ENCODE measurements at regions of chr14 and their contacts with region 1.

Region 1: DNA sequence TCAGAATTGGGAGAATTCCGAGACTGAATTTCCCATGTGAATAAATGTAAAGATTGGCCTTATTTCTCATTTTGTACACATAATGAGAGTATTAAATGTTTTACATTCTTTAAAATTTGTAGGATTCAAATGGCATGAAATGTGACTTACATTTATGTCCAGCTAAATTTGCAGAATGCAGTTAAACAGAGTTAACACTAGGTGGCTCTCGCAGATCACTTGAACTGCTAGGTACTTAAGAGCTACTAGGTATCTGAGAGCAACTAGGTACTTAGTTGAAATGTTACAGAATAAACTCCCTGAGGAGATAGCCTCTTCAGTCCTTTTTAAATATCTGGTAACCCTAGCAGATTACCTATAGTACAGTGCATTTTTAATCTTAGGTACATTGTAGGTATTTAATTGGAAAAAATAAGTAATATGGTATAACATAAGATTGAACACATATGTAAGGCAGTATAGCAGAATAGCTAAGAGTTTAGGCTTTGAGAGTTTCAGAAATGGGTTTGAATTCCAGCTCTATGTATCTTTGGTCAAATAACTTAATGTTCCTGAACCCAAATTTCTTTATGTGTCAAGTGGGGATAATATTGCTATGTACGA is 73.8 kb downstream of the KIAA0586 start:
- DNase-seq: peak; percentile 67
- H3K4me3 ChIP-seq: no peak overlapping the region
- H3K27ac ChIP-seq: no peak overlapping the region
- H3K4me1 ChIP-seq: no peaks in the 10 kb centered on the region
- H3K27me3 ChIP-seq: no peaks in the 10 kb centered on the region
- CTCF ChIP-seq: peak; percentile 64 to 67
- POLR2A ChIP-seq: no peak

Region 2: GRCh38 chr14:58488550-58488949 is 12.8 kb before region 1 on chr14:
- CTCF ChIA-PET with region 1: interaction called, 19 read pairs
- POLR2A ChIA-PET with region 1: no interaction called
- dilution Hi-C with region 1: no loop called
- intact Hi-C with region 1: no loop called
- DNase-seq: peak; percentile 46
- H3K4me3 ChIP-seq: no peak overlapping the region
- H3K27ac ChIP-seq: no peak overlapping the region
- H3K4me1 ChIP-seq: peaks cover 6% of the 10 kb centered on the region
- H3K27me3 ChIP-seq: no peaks in the 10 kb centered on the region
- CTCF ChIP-seq: no peak
- POLR2A ChIP-seq: no peak

Region 3: GRCh38 chr14:58574623-58575022 is 73.3 kb after region 1 on chr14:
- CTCF ChIA-PET with region 1: interaction called, 22 read pairs
- POLR2A ChIA-PET with region 1: no interaction called
- dilution Hi-C with region 1: no loop called
- intact Hi-C with region 1: loop called (anchors 1 kb)
- DNase-seq: no peak
- H3K4me3 ChIP-seq: no peak overlapping the region
- H3K27ac ChIP-seq: no peak overlapping the region
- H3K4me1 ChIP-seq: no peaks in the 10 kb centered on the region
- H3K27me3 ChIP-seq: peaks cover 3 to 4% of the 10 kb centered on the region in 2 experiments
- CTCF ChIP-seq: peak in 1 of 2 donors; percentile 20
- POLR2A ChIP-seq: no peak

Region 4: DNA sequence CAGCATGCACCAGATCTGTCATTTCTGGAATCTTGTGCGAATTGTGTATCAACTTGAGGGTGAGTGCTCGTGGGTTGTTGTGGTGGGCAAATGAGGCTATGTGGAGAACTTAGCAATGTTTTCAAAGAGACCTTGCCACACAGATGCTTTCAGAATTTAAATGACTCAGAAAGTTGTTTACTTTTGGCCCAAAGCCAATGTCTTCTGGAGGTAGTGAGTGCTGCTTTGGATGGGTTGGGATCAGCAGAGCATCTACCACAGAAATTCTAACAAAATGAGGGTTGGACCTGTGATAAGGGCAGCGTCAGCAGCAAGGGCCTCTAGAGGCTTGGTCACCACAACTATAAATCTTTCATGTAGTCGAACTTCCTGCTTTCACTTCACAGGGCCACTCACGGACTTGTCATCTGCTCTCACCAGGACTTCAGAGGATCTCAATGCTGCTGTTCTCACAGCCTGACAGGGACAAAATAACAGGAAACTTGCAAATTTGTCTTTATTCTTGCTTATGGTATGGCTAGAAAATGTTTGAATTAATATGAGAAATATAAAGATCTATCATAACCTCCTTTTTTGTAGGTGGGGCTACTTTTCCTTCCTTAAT is 247.9 kb after region 1 on chr14:
- CTCF ChIA-PET with region 1: interaction called, 3 read pairs
- POLR2A ChIA-PET with region 1: no interaction called
- dilution Hi-C with region 1: no loop called
- intact Hi-C with region 1: loop called (anchors 10 kb)
- DNase-seq: peak; percentile 45
- H3K4me3 ChIP-seq: no peak overlapping the region
- H3K27ac ChIP-seq: no peak overlapping the region
- H3K4me1 ChIP-seq: peaks cover 17% of the 10 kb centered on the region
- H3K27me3 ChIP-seq: no peaks in the 10 kb centered on the region
- CTCF ChIP-seq: no peak
- POLR2A ChIP-seq: no peak

Region 5: DNA sequence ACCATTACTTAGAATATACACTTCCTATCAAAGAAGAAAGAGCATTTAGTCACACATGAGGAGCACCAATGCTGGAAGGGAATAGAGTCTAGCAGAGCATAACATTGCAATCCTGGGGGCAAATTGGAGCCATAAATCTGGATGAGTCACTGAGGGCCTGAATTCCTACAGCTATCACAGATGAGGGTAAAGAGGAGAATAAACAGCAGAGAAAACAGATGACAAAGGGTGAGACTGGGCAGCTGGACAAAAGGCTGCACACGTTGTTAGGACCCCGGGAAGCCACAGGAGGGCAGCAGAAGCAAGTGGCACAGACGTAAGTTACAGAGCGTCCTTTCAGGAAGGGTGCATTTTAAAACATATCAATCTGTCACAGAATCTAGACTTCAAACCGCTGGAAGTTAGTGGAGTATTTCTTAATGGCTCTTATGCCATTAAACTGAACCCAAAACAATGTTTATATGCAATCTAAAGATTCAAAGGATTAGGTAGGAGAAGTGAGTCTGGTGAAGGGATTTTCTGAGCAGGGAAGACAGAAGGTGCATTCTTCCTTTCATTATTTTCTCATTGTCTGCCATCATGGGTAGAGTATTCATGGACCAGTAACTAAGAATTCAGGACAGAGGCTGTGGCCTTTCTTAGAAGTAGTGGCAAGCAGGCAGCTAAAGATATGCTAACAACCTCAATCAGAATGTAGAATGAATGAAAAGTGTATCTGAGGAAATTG is 527.3 kb after region 1 on chr14:
- CTCF ChIA-PET with region 1: interaction called, 35 read pairs
- POLR2A ChIA-PET with region 1: no interaction called
- dilution Hi-C with region 1: no loop called
- intact Hi-C with region 1: loop called (anchors 1 kb)
- DNase-seq: peak; percentile 66
- H3K4me3 ChIP-seq: no peak overlapping the region
- H3K27ac ChIP-seq: no peak overlapping the region
- H3K4me1 ChIP-seq: no peaks in the 10 kb centered on the region
- H3K27me3 ChIP-seq: peaks cover 5 to 8% of the 10 kb centered on the region in 2 experiments
- CTCF ChIP-seq: peak; percentile 82 to 87
- POLR2A ChIP-seq: no peak

Region 6: DNA sequence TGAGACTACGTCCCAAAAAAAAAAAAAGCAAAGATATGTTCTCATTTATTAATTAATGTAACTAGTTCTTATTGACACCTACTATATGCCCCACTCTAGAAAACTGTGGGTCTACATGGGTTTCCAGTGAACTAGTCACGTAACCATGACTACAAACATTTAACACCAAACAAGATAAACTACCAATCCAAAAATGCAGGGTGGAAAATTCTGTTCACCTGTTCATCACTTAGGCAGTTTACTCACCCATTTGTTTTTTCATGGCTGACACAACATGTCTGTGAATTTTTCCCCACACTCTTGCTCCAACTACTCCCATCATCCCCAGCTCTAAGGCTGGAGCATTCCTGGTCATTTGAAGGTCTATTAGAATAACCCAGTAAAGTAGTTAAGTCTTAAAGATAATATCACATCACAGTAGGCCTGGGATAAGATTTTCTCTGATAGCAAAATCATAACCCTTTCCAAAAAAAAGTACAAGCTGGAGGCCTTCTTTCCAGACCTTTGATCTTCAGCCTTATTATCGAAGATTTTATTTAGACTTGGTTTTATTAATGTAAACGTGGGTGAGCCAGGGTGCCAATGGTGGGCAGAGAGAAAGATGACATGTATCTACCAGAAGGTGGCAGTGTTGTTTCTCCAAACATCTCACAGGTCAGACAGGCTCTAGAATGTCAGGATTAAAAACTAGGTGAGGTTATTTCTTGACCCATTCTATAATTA is 625.6 kb after region 1 on chr14:
- CTCF ChIA-PET with region 1: interaction called, 30 read pairs
- POLR2A ChIA-PET with region 1: no interaction called
- dilution Hi-C with region 1: no loop called
- intact Hi-C with region 1: loop called (anchors 1 kb)
- DNase-seq: peak; percentile 64
- H3K4me3 ChIP-seq: no peak overlapping the region
- H3K27ac ChIP-seq: no peak overlapping the region
- H3K4me1 ChIP-seq: no peaks in the 10 kb centered on the region
- H3K27me3 ChIP-seq: peaks cover 5 to 6% of the 10 kb centered on the region in 2 experiments
- CTCF ChIP-seq: peak; percentile 58 to 60
- POLR2A ChIP-seq: no peak

Region 7: DNA sequence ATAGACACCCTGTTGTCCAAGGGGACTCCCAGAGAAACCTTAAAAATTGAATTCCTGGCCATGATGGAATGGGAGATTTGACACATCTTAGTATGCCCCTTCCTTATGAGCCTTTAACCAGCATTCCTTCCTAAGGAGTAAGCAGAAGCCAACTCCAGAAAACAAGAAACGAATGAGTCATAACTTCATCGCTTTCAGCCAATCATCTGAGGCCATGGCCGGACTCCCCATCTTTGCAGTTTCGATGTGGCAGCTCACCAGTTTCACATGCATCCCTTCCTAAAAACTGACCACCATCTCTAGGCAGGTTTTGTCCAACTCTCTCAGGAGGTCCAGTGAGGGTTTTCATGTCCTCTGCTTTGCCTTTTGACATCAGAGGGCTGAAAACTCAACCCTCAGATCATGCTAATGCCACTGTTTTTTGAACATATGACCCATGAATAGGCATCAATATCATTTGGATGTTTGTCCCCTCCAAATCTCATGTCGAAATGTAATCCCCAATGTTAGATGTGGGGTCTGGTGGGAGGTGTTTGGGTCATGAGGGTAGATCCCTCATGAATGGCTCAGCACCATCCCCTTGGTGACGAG is 707.0 kb after region 1 on chr14:
- CTCF ChIA-PET with region 1: no interaction called
- POLR2A ChIA-PET with region 1: no interaction called
- dilution Hi-C with region 1: no loop called
- intact Hi-C with region 1: no loop called
- DNase-seq: no peak
- H3K4me3 ChIP-seq: no peak overlapping the region
- H3K27ac ChIP-seq: no peak overlapping the region
- H3K4me1 ChIP-seq: peaks cover 6% of the 10 kb centered on the region
- H3K27me3 ChIP-seq: no peaks in the 10 kb centered on the region
- CTCF ChIP-seq: no peak
- POLR2A ChIP-seq: no peak

Measured in endothelial cell of umbilical vein (primary cell).